ENCODE measurements at regions of chr3 and their contacts with region 1.

Region 1: DNA sequence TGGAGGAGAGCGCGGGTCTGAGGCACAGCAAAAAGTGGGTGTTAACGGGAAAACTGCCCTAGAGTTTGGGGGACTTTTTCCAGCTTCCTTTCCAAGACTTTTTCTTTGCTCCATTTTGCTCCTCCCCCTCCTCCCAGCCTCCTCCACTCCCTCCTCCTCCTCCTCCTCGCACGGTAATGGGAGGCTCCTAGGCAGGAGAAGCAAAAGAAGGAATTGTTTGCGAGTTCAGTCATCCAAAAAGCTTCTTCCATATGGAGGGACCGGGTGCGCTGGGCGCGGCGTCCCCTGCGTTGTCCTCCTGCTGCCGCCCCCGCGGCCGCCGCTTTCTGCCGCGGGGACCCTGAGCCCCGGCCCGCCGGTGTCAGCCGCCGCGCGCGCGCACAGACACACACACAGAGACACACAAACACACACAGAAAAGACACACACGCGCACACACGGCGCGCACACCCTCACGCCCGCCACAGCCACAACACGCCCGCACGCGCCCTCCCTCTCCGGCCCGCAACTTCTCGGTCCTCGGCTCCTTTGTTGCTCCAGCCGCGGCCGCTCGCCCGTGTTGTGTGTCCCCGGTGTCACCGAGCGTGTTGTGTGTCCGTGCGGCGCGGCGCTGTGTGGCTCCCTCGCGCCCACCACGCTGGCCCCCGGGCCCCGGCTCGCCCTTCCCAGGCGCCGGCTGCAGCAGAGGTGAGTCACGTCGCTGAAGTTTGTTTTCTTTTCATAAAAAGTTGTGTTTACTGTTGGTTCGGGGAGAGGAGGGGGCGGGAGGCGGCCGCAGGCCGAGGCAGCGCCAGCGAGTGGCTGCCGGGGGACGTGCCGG is at the start of gene BOC:
- DNase-seq: peak; percentile 69
- ATAC-seq: peak; percentile 74
- H3K4me3 ChIP-seq: peak within 1 kb of the TSS; percentile 86
- H3K27ac ChIP-seq: 0 out of 2 replicates have a peak within 1 kb of the TSS, but pooled peaks have one; percentile 16
- H3K4me1 ChIP-seq: peaks cover 7% of the 10 kb centered on the region
- H3K27me3 ChIP-seq: no peaks in the 10 kb centered on the region
- CTCF ChIP-seq: no peak
- total RNA-seq, gene BOC: 4.4 and 7.3 TPM in 2 replicates

Region 2: DNA sequence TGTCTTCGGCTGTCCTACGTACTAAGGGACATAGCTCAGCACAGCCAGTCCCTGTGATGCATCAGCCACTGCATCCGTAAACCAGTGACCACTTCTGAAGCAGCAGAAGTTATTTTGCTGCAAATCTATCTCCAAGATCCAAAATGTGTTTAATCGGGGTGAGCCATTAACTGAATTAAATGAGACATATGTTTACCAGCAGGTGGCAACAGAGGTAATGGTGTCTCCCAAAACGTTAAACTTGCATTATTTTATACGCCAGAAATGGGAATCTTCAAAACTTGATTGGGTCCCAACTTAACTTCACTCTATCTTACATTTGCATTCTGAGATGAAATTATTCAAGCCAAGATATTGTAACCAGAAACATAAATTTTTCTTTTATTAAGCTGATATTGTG is 75.5 kb before region 1 on chr3:
- CTCF ChIA-PET with region 1: no interaction called
- POLR2A ChIA-PET with region 1: no interaction called
- intact Hi-C with region 1: loop called (anchors 2 kb)
- DNase-seq: peak; percentile 60
- ATAC-seq: peak; percentile 46
- H3K4me3 ChIP-seq: no peak overlapping the region
- H3K27ac ChIP-seq: no peak overlapping the region
- H3K4me1 ChIP-seq: peaks cover 16% of the 10 kb centered on the region; the same call in 1 of the 2 replicates
- H3K27me3 ChIP-seq: no peaks in the 10 kb centered on the region
- CTCF ChIP-seq: peak; percentile 90

Region 3: GRCh38 chr3:113275929-113276750 is 64.6 kb after region 1 on chr3:
- CTCF ChIA-PET with region 1: no interaction called
- POLR2A ChIA-PET with region 1: interaction called, 4 read pairs
- intact Hi-C with region 1: loop called (anchors 1 kb)
- DNase-seq: peak; percentile 55
- ATAC-seq: peak; percentile 89
- H3K4me3 ChIP-seq: no peak overlapping the region
- H3K27ac ChIP-seq: no peak overlapping the region
- H3K4me1 ChIP-seq: peaks cover 10% of the 10 kb centered on the region; the same call in 1 of the 2 replicates
- H3K27me3 ChIP-seq: no peaks in the 10 kb centered on the region
- CTCF ChIP-seq: peak; percentile 43; the same call in 1 of the 2 replicates

Measured in PC-3 (cell line).